Activated CD8-positive, alpha-beta T cell treated with anti-CD3 and anti-CD28 coated beads, Interleukin-2, amount 10 ng/mL, durations not matched to agents 7 days and 5 days (primary cell): ENCODE measurements at regions of chr2 and their contacts with region 1.

Region 1: DNA sequence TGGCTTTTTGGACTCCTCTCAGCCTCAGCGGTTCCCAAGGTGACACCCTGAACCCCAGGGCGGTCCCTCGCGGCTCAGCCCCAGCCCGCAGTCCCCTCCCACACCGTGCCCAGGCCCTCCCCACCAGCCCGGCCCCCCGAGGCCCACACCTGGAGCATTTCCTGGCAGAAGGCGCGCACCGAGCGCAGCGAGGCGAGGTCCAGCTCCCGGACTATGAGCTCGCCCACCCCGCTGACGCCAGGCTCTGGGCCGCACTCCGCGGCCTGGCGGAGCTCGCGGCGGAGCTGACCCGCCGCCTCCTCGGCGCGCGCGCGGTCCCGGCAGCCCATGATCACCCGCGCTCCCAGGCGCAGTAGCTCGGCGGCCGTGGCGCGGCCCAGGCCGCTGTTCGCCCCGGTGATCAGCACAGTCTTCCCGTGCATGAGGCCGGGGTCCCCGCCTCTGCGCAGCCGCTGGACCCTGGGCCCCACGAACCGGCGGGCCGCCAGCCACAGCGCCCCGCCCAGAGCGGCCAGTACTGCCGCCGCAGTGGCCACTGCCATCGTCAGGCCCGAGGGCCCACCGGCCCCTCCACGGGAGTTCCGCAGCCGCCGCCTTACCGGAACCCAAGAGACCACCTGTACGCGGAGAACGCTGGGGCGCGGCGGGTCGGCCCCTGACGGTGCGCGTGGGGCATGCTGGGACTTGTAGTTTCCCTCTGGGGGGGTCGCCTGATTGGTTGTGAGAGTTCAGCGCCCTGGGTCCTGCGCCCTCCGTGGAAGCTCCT is at the start of gene RDH14:
- DNase-seq: peak; percentile 95
- ATAC-seq: peak; percentile 92
- H3K4me3 Mint-ChIP-seq: peak within 1 kb of the TSS; percentile 89
- H3K27ac Mint-ChIP-seq: peak within 1 kb of the TSS; percentile 96
- H3K4me1 Mint-ChIP-seq: peaks cover 34% of the 10 kb centered on the region
- H3K27me3 Mint-ChIP-seq: no peaks in the 10 kb centered on the region
- total RNA-seq, gene RDH14: 14.6 to 15.7 TPM

Region 2: GRCh38 chr2:18546567-18546966 is 13.6 kb before region 1 on chr2:
- CTCF ChIA-PET with region 1: interaction called, 5 read pairs
- POLR2A ChIA-PET with region 1: interaction called, 10 read pairs
- DNase-seq: no peak
- ATAC-seq: peak; percentile 51
- H3K4me3 Mint-ChIP-seq: no peak overlapping the region
- H3K27ac Mint-ChIP-seq: peak overlapping the region; percentile 33
- H3K4me1 Mint-ChIP-seq: peaks cover 14% of the 10 kb centered on the region
- H3K27me3 Mint-ChIP-seq: no peaks in the 10 kb centered on the region